Activated naive CD4-positive, alpha-beta T cell treated with anti-CD3 and anti-CD28 coated beads, Interleukin-2, amount 10 ng/mL, durations not matched to agents 7 days and 5 days (primary cell): ENCODE measurements at regions of chr2 and their contacts with region 1.

Region 1: DNA sequence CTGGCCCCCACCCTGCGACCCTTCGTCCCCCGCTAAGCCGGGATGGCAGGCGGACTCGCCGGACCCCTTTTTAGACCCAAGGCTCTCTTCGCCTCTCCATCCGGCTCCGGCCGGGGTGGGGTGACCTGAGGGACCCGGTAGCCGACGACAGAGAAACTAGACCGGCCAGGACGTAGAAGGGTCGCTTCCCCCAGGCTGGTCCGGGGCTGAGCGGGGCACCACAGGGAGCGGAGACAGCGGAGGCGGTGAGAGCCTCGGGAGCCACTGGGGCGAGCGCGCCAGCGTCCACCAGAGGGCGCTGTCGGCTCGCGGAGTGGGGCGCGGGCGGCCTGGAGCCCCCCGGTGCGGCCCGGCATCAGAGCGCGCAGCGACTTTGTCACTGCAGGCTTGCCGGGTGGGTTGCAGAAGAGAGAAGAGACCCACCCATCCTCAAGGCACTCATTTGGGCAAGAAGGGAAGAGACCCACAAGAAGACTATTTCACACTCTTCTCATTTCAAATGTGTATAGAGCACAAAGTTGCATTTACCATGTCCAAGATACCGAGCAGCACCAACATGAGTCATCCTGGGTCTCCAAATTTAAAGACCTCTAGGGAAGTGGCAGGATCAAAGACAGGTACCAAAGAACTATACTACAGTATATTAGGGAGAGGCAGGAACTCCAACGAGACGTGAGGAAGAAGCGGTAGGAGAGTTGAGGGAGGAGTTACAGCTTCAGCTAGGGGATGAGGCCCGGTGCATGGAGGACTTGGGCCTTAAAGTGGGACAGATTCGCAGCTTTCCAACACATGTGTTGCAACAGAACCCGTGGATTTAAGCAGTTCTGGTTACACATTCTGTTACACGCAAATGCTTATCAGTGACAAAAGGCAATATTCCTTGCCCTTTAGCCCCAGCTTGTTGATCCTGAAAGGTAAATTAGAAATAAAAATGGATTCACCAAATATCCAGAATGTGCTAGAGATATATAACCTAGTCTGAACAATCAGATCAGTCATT is 7.6 kb upstream of the PRKCE start:
- DNase-seq: peak; percentile 73
- H3K4me3 Mint-ChIP-seq: peak overlapping the region; percentile 47
- H3K27ac Mint-ChIP-seq: no peak overlapping the region
- H3K4me1 Mint-ChIP-seq: peaks cover 6% of the 10 kb centered on the region
- H3K27me3 Mint-ChIP-seq: peaks cover 72% of the 10 kb centered on the region

Region 2: GRCh38 chr2:45935791-45936622 is 292.2 kb after region 1 on chr2:
- CTCF ChIA-PET with region 1: interaction called, 20 read pairs
- DNase-seq: peak; percentile 73
- H3K4me3 Mint-ChIP-seq: no peak overlapping the region
- H3K27ac Mint-ChIP-seq: no peak overlapping the region
- H3K4me1 Mint-ChIP-seq: no peaks in the 10 kb centered on the region
- H3K27me3 Mint-ChIP-seq: no peaks in the 10 kb centered on the region